H1 (cell line): ENCODE measurements at regions of chr19 and their contacts with region 1.

Region 1: GRCh38 chr19:41795031-41795461 is 1.3 kb upstream of the CEACAM3 start:
- DNase-seq: peak; percentile 3 to 66
- H3K4me3 ChIP-seq: no peak overlapping the region
- H3K27ac ChIP-seq: no peak overlapping the region
- H3K4me1 ChIP-seq: no peaks in the 10 kb centered on the region
- H3K27me3 ChIP-seq: no peaks in the 10 kb centered on the region; a peak in 1 of 7 replicates
- CTCF ChIP-seq: peak; percentile 43 to 67 (median 54)
- EP300 ChIP-seq: no peak
- POLR2A ChIP-seq: no peak
- RAD21 ChIP-seq: peak; percentile 22 to 30; a peak in 3 of 4 replicates

Region 2: GRCh38 chr19:41821003-41821735 is 26.1 kb after region 1 on chr19:
- CTCF ChIA-PET with region 1: interaction called, 12 read pairs
- POLR2A ChIA-PET with region 1: no interaction called
- DNase-seq: peak; percentile 27 to 50
- H3K4me3 ChIP-seq: no peak overlapping the region
- H3K27ac ChIP-seq: no peak overlapping the region
- H3K4me1 ChIP-seq: no peaks in the 10 kb centered on the region
- H3K27me3 ChIP-seq: no peaks in the 10 kb centered on the region
- CTCF ChIP-seq: peak in 2 of 3 experiments; percentile 57 to 73; a peak in 3 of 4 replicates
- EP300 ChIP-seq: no peak
- POLR2A ChIP-seq: no peak
- RAD21 ChIP-seq: peak; percentile 75 to 81

Region 3: GRCh38 chr19:41895745-41896580 is 100.9 kb after region 1 on chr19:
- CTCF ChIA-PET with region 1: no interaction called
- POLR2A ChIA-PET with region 1: no interaction called
- DNase-seq: no peak
- H3K4me3 ChIP-seq: no peak overlapping the region
- H3K27ac ChIP-seq: no peak overlapping the region
- H3K4me1 ChIP-seq: peaks cover 0 to 5% (median 1%) of the 10 kb centered on the region in 4 experiments; a peak in 1 of 7 replicates
- H3K27me3 ChIP-seq: no peaks in the 10 kb centered on the region
- CTCF ChIP-seq: peak; percentile 32 to 65 (median 64)
- EP300 ChIP-seq: no peak
- POLR2A ChIP-seq: no peak
- RAD21 ChIP-seq: peak in 1 of 2 experiments; percentile 9; a peak in 1 of 4 replicates